ENCODE measurements at regions of chr6 and their contacts with region 1.

Region 1: GRCh38 chr6:43193939-43194338 is 11.9 kb downstream of the CUL9 start:
- DNase-seq: no peak
- ATAC-seq: no peak
- H3K4me3 ChIP-seq: no peak overlapping the region
- H3K27ac ChIP-seq: no peak overlapping the region
- H3K4me1 ChIP-seq: no peaks in the 10 kb centered on the region
- H3K27me3 ChIP-seq: no peaks in the 10 kb centered on the region
- CTCF ChIP-seq: no peak

Region 2: GRCh38 chr6:42745707-42746462 is 448.1 kb before region 1 on chr6 and contains the start of gene TBCC:
- CTCF ChIA-PET with region 1: no interaction called
- POLR2A ChIA-PET with region 1: no interaction called
- intact Hi-C with region 1: no loop called
- DNase-seq: peak; percentile 97
- ATAC-seq: peak; percentile 66
- H3K4me3 ChIP-seq: peak within 1 kb of the TSS; percentile 98
- H3K27ac ChIP-seq: peak within 1 kb of the TSS; percentile 80
- H3K4me1 ChIP-seq: peaks cover 21% of the 10 kb centered on the region
- H3K27me3 ChIP-seq: no peaks in the 10 kb centered on the region
- CTCF ChIP-seq: no peak
- total RNA-seq, gene TBCC: 32.3 and 36.5 TPM in 2 replicates

Region 3: DNA sequence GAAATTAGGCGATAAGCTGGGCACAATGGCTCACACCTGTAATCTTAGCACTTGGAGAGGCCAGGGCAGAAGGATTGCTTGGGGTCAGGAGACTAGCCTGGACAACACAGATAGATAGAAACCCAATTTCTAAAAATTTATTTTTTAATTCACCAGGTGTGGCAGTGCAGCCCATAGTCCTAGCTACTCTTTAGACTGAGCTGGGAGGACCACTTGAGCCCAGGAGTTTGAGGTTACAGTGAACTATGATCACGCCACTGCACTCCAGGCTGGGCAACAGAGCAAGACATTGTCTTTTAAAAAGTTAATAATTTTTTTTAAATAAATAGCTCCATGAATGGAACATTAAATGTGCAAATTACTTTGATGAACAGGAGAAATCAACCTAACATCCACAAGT is 167.3 kb after region 1 on chr6:
- CTCF ChIA-PET with region 1: no interaction called
- POLR2A ChIA-PET with region 1: interaction called, 12 read pairs
- intact Hi-C with region 1: no loop called
- DNase-seq: no peak
- ATAC-seq: peak; percentile 53; the same call in 1 of the 2 replicates
- H3K4me3 ChIP-seq: no peak overlapping the region
- H3K27ac ChIP-seq: no peak overlapping the region
- H3K4me1 ChIP-seq: no peaks in the 10 kb centered on the region
- H3K27me3 ChIP-seq: no peaks in the 10 kb centered on the region
- CTCF ChIP-seq: 0 out of 2 replicates have a peak, but pooled peaks have one; percentile 23